ENCODE measurements at regions of chr3 and their contacts with region 1.

Region 1: DNA sequence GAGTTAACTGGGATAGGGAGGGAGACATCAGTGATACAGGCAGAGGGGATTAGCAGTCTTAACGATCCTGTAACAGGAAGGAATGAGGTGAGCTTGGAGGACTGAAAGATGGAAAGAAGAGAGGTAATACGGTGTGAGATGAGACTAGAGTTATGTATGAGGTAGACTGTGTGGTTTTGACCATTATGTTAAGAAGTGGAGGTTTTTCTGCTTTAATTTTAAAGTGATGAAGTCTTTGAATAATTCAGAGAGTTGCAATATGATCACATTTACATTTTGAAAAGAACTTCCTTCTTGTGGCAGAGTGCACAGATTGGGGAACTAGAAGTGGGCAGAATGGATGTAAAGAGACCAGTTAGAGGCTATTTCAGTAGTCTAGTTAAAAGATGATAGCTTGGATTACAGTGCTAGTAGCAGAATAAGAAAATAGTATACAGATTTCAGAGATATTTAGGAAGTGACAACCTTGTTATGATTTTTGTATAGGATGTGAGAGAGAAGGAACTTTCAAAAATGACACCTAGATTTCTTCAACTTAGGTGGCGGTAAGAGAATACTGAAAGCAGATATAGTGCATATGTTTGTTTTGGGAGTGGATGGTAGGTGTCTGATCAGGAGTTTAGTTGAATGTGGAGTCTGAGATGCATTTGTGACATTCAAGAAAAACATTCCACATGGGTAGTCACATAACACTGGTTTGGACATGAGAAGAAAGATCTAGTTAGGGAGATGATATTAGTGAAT is 40.5 kb downstream of the STT3B start:
- DNase-seq: no peak
- H3K4me3 Mint-ChIP-seq: no peak overlapping the region
- H3K27ac Mint-ChIP-seq: no peak overlapping the region
- H3K4me1 Mint-ChIP-seq: peaks cover 56% of the 10 kb centered on the region
- H3K27me3 Mint-ChIP-seq: no peaks in the 10 kb centered on the region

Region 2: GRCh38 chr3:31539275-31539674 is 33.9 kb before region 1 on chr3:
- CTCF ChIA-PET with region 1: no interaction called
- POLR2A ChIA-PET with region 1: no interaction called
- intact Hi-C with region 1: no loop called
- DNase-seq: no peak
- H3K4me3 Mint-ChIP-seq: no peak overlapping the region
- H3K27ac Mint-ChIP-seq: no peak overlapping the region
- H3K4me1 Mint-ChIP-seq: peaks cover 75% of the 10 kb centered on the region
- H3K27me3 Mint-ChIP-seq: no peaks in the 10 kb centered on the region

Region 3: DNA sequence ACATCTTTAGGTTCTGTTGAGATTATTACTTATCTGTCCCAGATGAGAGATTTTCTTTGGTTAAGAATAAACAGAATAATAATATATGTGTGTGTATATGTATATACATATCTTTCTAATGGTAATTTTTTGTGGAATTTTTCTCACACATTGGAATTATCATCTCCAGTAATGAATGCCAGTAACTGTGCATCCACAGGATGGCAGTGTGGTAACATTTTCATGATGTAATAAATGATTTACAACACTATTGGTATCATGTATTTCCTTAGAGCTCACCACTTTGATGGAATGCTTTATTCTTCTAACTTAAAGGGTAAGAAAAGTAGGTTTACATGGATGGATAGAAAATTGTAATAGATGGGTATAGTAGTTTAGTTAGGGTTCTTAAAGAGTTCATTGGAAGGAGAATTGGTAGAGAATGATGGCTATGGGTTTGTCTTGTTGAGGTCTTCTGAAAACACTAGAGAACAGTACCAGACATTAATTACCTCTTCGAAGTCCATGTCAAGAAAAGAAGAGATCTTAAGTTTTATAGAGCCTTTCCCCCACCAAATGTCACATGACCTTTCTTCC is 37.6 kb after region 1 on chr3:
- CTCF ChIA-PET with region 1: no interaction called
- POLR2A ChIA-PET with region 1: no interaction called
- intact Hi-C with region 1: loop called (anchors 5 kb)
- DNase-seq: no peak
- H3K4me3 Mint-ChIP-seq: no peak overlapping the region
- H3K27ac Mint-ChIP-seq: no peak overlapping the region
- H3K4me1 Mint-ChIP-seq: peaks cover 69% of the 10 kb centered on the region
- H3K27me3 Mint-ChIP-seq: no peaks in the 10 kb centered on the region

Measured in activated CD4-positive, alpha-beta memory T cell treated with anti-CD3 and anti-CD28 coated beads for 36 hours (primary cell).